ENCODE measurements at regions of chr14 and their contacts with region 1.

Region 1: GRCh38 chr14:34982417-34983147 is at the start of gene SRP54:
- DNase-seq: peak; percentile 98
- ATAC-seq: peak; percentile 94
- H3K4me3 ChIP-seq: peak within 1 kb of the TSS; percentile 58
- H3K27ac ChIP-seq: peak within 1 kb of the TSS; percentile 86
- H3K4me1 ChIP-seq: peaks cover 4% of the 10 kb centered on the region
- H3K27me3 ChIP-seq: no peaks in the 10 kb centered on the region
- CTCF ChIP-seq: peak; percentile 26; the same call in 1 of the 2 replicates
- POLR2A ChIP-seq: peak; percentile 90
- RAD21 ChIP-seq: peak; percentile 37
- total RNA-seq, gene SRP54: 63.3 and 109 TPM in 2 replicates

Region 2: DNA sequence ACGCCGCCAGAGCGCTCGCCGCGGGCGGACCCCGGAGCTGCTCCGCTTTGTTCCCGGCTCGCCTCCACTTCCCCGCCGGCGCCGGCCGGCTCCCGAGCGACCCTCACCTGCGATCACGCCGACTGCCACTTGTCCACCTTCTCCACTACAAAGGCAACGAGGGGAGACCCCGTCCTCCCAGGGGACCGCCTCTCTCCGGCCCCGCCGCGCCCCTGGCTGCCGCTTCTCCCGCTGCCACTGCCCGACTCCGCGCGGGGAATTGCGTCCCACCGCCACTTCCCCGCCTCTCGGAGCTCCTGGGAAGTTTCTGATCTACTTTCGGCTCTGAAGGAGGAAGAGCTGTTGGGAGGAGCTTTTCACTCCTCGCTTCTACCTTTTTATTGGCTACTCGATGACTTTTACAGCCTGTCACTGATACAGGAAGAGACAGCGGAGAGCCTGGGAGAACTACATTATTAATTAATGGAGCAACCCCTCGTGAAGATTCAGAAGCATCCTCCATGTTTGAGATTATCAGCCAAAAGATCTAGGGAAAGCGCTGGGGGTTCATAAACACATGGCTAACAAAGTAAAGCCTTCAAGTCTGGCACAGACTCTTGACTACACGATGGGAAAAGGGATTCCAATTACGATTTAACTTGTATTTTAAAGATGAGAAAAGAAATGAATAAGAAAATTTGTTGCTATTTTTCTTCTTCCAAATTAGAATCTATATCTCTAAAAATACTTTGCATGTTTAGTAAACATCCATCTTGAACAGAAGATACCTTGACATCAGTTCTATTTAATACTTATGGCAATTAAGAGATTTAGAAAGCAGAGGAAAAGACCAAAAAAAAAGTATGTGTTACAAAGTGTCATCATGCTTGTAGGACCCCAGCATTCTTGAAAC is 107.3 kb before region 1 on chr14 and contains the start of gene BAZ1A:
- CTCF ChIA-PET with region 1: interaction called, 3 read pairs
- POLR2A ChIA-PET with region 1: interaction called, 3 read pairs
- dilution Hi-C with region 1: no loop called
- in situ Hi-C with region 1: no loop called
- intact Hi-C with region 1: loop called (anchors 1 kb)
- DNase-seq: peak; percentile 91
- ATAC-seq: peak; percentile 81
- H3K4me3 ChIP-seq: peak within 1 kb of the TSS; percentile 96
- H3K27ac ChIP-seq: peak within 1 kb of the TSS; percentile 97
- H3K4me1 ChIP-seq: peaks cover 2% of the 10 kb centered on the region; the same call in 1 of the 2 replicates
- H3K27me3 ChIP-seq: no peaks in the 10 kb centered on the region
- CTCF ChIP-seq: 0 out of 2 replicates have a peak, but pooled peaks have one; percentile 8
- POLR2A ChIP-seq: peak; percentile 91
- RAD21 ChIP-seq: peak; percentile 9; the same call in 1 of the 2 replicates
- total RNA-seq, gene BAZ1A: 23.8 and 43.6 TPM in 2 replicates